GM13977 (cell line): ENCODE measurements at regions of chr17 and their contacts with region 1.

Region 1: DNA sequence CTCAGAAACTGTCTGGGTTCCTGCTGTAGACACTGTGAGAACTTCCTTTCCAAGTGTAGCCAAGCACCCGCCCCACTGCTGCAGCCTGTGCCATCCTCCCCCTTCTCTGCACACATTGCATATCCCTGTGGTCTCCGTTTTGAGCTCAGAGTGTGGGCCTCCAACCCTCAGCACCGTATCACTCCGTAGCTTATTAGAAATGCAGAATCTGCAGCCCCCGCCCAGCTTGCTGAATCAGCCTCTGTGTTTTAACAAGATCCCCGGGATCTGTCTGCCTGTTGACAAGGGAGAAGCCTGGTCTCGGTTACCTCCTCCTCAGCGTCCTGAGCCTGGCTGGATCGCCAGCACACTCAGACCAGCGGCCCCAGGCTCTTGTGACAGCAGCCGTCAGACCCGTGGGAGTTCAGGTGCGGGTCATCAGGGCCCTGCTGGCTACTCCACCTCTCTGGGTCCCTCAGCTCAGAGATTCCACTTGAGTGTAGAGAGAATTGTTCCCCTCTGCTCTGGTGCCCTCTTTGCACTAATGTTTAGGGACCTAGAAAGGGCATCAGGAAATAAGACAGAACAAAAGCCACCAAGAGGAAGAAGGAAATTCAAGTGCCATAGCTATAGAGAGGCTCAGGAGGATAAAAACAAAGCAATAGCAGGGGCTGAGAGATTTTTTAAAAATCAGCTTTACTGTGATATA is 92.3 kb downstream of the PITPNC1 start:
- DNase-seq: no peak
- CTCF ChIP-seq: no peak

Region 2: DNA sequence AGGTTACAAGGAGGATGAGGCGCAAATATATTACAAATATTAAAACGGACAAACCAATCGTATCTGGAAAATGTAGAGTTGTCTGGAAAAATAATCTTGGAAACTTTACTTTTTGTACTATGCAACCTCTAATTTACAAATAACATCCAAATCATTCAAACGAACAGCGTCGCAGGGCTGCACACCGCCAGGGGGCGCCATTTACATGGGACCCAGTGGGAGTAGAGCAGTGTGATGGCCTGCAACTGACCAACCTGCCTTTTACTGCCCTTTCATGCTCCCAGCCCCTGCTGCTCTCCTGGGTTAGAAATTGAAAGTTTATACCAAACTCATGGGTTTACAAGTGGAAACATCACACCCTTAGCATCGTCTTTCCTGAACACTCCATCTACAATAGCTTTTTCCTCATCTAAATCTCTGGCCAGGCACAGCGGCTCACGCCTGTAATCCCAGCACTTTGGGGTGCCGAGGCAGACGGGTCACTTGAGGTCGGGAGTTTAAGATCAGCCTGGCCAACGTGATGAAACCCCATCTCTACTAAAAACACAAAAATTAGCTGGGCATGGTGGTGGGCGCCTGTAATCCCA is 82.3 kb before region 1 on chr17:
- in situ Hi-C with region 1: loop called (anchors 5 kb)
- DNase-seq: peak; percentile 43
- CTCF ChIP-seq: peak; percentile 84

Region 3: GRCh38 chr17:67759355-67760171 is 290.2 kb after region 1 on chr17:
- in situ Hi-C with region 1: no loop called
- DNase-seq: no peak
- CTCF ChIP-seq: no peak